H1 (cell line): ENCODE measurements at regions of chr16 and their contacts with region 1.

Region 1: DNA sequence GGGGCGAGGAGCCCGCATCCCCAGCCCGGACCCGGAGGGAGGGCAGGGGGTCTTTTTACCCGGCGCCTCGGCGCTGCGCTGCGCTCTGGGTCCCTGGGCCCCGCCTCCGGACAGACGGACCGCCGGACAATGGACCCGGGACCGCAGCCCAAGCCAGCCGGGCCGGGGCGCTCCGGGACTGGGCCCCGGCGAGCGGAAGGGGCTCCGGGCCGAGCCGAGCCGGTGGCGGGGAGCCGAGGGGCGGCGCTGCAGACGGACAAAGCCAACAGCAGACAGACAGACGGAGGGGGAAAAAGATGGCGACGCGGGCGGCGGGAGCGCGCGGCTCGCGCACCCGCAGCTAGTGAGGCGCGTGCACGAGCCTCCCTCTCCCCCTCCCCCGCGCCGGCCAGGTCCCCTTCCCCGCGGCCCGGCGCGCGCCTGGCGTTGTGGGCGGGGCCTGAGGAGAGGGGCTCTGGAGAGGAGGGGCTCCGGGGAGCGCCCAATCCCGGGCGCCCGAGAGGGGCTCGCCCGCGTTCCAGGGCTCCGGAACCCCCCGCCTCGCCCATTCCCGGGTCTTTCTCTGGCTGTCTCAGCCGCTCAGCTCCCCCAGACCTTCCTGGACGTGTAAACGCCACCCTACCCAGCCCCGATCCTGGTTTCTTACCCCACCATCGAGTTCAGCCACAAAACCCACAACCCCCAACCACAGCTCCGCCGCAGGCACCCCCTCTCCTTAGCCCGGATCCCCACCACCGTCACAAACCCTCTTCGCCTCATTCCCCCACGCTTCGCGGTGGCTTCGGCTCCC is at the start of gene ZNF821:
- DNase-seq: peak; percentile 73 to 95
- H3K4me3 ChIP-seq: peak within 1 kb of the TSS; percentile 70 to 98 (median 79)
- H3K27ac ChIP-seq: peak within 1 kb of the TSS; percentile 90
- H3K4me1 ChIP-seq: peaks cover 6 to 10% (median 7%) of the 10 kb centered on the region in 4 experiments; a peak in 6 of 7 replicates
- H3K27me3 ChIP-seq: no peaks in the 10 kb centered on the region
- CTCF ChIP-seq: peak in 2 of 3 experiments; percentile 29 to 47; a peak in 2 of 4 replicates
- EP300 ChIP-seq: no peak
- POLR2A ChIP-seq: peak; percentile 78 to 92
- RAD21 ChIP-seq: peak in 1 of 2 experiments; percentile 41; a peak in 2 of 4 replicates
- total RNA-seq, gene ZNF821: 13.6 and 14.1 TPM in 2 replicates

Region 2: DNA sequence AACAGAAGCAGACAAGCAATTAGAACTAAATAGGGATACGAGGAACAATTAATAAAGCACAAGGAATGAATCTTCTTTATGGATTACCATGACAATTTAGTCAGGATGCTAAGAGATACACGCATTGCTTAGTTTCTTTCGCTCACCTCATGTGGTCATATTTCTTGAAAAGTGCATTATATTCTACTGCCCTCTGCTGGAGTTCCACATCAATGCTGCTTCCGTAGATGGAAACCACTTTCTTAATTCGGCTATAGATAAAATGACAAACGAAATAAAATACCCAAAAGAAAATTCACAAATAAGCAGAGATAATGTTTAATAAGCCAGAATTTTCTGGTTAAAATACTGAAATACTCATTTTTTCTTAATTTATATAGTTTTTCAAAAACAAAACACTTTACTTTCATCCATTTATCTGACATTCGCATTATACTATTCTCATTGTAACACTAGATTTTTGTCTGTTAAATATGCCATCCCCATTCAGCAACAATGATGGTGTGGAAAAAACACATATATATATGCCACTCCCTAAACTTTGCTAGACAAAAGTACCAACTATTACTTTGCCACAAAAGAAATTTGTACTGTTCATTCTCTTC is 137.5 kb before region 1 on chr16:
- CTCF ChIA-PET with region 1: no interaction called
- POLR2A ChIA-PET with region 1: no interaction called
- DNase-seq: no peak
- H3K4me3 ChIP-seq: no peak overlapping the region
- H3K27ac ChIP-seq: no peak overlapping the region
- H3K4me1 ChIP-seq: no peaks in the 10 kb centered on the region
- H3K27me3 ChIP-seq: no peaks in the 10 kb centered on the region
- CTCF ChIP-seq: peak in 2 of 3 experiments; percentile 57 to 67; a peak in 3 of 4 replicates
- EP300 ChIP-seq: no peak
- POLR2A ChIP-seq: no peak
- RAD21 ChIP-seq: peak; percentile 74 to 78

Region 3: GRCh38 chr16:71859762-71860521 is 24.1 kb before region 1 on chr16:
- CTCF ChIA-PET with region 1: interaction called, 35 read pairs
- POLR2A ChIA-PET with region 1: interaction called, 6 read pairs
- DNase-seq: no peak
- H3K4me3 ChIP-seq: no peak overlapping the region
- H3K27ac ChIP-seq: no peak overlapping the region
- H3K4me1 ChIP-seq: no peaks in the 10 kb centered on the region
- H3K27me3 ChIP-seq: no peaks in the 10 kb centered on the region
- CTCF ChIP-seq: no peak
- EP300 ChIP-seq: no peak
- POLR2A ChIP-seq: no peak
- RAD21 ChIP-seq: no peak

Region 4: DNA sequence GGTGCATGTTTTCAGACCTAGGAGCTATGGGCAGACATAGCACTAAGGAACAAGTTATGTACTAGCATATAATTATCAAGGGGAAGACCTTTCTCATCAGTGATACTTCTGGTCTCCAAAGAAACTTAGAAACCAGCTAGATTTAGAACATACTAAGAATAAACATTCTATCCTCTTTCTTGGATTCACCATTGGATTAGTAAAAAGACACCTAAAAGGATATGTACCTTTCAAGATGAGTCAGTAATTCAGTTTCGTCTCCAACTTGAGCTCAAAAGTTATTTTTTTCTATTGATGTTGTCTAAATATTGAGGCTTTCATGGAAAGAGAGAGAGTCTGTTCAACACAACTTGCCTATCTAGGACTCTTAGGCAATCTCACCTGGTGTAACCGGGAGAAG is 13.2 kb before region 1 on chr16:
- CTCF ChIA-PET with region 1: interaction called, 57 read pairs
- POLR2A ChIA-PET with region 1: interaction called, 4 read pairs
- DNase-seq: no peak
- H3K4me3 ChIP-seq: no peak overlapping the region
- H3K27ac ChIP-seq: no peak overlapping the region
- H3K4me1 ChIP-seq: no peaks in the 10 kb centered on the region
- H3K27me3 ChIP-seq: no peaks in the 10 kb centered on the region
- CTCF ChIP-seq: no peak
- EP300 ChIP-seq: no peak
- POLR2A ChIP-seq: no peak
- RAD21 ChIP-seq: no peak

Region 5: DNA sequence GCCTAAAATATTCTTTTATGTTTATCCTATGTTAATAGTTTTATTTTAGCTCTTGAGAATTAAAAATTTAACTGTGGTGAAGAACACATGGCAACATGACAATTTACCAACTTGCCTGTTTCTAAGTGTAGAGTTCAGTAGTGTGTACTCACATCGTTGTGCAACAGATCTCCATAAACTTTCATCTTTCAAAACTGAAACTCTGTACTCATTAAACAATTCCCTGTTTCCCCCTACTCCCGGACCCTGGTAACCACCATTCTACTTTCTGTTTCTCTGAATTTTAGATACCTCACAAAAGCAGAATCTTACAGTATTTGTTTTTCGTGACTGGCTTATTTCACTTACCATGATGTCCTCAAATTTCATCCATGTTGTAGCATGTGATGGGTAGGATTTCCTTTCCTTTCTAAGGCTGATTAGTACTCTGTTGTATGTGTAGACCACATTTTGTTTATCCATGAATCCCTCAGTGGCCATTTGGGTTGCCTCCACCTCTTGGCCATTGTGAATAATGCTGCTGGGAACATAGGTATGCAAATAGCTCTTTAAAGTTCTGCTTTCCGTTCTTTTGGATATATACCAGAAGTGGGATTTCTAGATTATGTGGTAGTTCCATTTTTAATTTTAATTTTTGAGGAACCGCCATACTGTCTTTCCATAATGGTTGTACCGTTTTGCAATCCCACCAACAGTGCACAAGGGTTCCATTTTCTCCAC is 28.6 kb after region 1 on chr16:
- CTCF ChIA-PET with region 1: interaction called, 11 read pairs
- POLR2A ChIA-PET with region 1: interaction called, 6 read pairs
- DNase-seq: no peak
- H3K4me3 ChIP-seq: no peak overlapping the region
- H3K27ac ChIP-seq: no peak overlapping the region
- H3K4me1 ChIP-seq: peaks cover 0 to 2% (median under 1%) of the 10 kb centered on the region in 4 experiments; a peak in 5 of 7 replicates
- H3K27me3 ChIP-seq: no peaks in the 10 kb centered on the region
- CTCF ChIP-seq: no peak
- EP300 ChIP-seq: no peak
- POLR2A ChIP-seq: no peak
- RAD21 ChIP-seq: no peak

Region 6: DNA sequence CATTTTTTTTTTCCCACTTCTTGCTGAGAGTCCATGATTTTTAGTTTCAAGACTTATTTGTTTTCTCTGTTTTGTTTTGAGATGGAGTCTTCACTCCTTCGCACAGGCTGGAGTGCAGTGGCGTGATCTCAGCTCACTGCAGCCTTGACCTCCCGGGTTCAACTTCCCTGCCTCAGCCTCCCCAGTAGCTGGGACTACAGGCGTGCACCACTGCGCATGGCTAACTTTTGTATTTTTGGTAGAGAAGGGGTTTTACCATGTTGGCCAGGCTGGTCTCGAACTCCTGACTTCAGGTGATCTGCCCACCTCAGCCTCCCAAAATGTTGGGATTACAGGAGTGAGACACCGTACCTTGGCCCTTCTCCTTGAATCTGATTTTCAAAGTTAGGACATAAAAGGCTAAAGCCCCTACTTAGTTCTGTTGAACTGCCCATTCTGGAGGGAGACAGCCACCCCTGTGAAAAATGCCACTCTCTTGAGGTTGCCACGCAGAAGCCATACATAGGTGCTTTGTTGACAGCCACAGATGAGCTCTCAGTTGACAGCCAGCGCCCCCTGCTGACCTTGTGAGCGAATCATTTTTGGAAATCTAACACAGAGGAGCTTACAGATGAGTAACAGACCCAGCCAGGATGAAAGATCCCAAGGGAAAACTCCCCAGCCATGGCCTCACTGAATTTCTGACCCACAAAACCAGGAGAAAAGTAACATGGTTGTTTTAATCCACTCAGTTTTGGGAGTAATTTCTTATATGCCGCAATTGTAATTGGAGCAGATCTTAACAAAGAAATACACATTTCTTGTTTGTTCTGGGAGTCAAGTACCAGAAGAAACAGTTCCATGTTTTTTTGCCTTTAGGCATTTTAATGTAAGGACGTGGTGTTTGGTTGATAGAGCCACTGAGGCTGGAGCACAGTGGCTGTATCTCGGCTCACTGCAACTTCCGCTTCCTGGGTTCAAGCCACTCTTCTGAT is 77.3 kb after region 1 on chr16:
- CTCF ChIA-PET with region 1: interaction called, 10 read pairs
- POLR2A ChIA-PET with region 1: interaction called, 3 read pairs
- DNase-seq: peak; percentile 69 to 88
- H3K4me3 ChIP-seq: no peak overlapping the region
- H3K27ac ChIP-seq: no peak overlapping the region
- H3K4me1 ChIP-seq: no peaks in the 10 kb centered on the region
- H3K27me3 ChIP-seq: no peaks in the 10 kb centered on the region
- CTCF ChIP-seq: peak; percentile 75 to 84 (median 80)
- EP300 ChIP-seq: no peak
- POLR2A ChIP-seq: no peak
- RAD21 ChIP-seq: peak; percentile 87 to 91